Posterior cingulate gyrus (tissue), 11 donors: ENCODE measurements at regions of chr1 and their contacts with region 1.

Region 1: DNA sequence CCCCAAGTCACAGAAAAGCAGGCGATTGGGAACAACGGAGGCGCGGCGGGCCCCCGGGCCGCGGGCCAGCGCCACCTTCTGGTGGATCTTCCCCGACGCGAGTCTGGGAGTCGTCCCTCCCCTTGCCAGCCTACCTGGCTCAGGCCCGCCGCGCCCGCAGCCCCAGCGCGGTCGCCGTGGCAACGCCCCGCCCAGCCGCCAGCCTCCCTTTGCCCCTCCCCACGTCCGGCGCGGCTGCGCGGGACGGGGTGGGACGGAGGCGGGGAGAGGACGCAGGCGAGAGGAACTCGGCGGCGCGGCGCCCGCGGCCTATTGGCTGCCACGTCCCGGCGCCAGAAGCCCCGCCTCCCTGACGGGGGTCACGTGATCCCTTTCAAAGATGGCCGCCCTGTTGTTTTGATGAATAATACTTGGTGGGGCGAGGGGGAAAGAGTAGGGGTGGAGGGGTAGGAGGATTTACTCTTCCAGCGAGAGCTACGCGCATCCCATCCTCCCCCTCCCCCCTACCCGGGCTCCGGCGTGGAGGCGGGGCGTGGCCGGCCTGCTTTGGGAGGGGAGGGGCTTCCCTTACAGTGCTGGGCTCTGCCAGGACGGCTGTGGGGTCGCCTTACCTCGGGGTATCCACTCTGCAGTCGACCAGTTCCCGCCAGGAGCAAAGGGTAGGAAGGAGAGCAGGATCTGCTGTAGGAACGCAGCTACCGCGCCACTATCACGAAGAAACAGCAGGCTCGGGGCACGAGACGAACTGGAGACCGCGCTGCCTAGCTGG is at the start of gene UBE4B:
- DNase-seq: peak; percentile 96 to 100 (median 98)

Region 2: GRCh38 chr1:9150582-9151327 is 882.0 kb before region 1 on chr1:
- intact Hi-C with region 1: no loop called
- DNase-seq: peak in 2 of 10 donors; percentile 36 to 83

Region 3: GRCh38 chr1:9874959-9875635 is 157.7 kb before region 1 on chr1:
- intact Hi-C with region 1: loop called (anchors 10 kb)
- DNase-seq: peak; percentile 56 to 96 (median 78)

Region 4: GRCh38 chr1:9957726-9958125 is 75.0 kb before region 1 on chr1:
- intact Hi-C with region 1: loop called (anchors 5 kb)
- DNase-seq: no peak

Region 5: GRCh38 chr1:10108134-10108663 is 75.4 kb after region 1 on chr1:
- intact Hi-C with region 1: loop called (anchors 5 kb)
- DNase-seq: no peak

Region 6: GRCh38 chr1:10152709-10153284 is 120.0 kb after region 1 on chr1:
- intact Hi-C with region 1: loop called (anchors 5 kb)
- DNase-seq: peak; percentile 33 to 96 (median 80)

Region 7: DNA sequence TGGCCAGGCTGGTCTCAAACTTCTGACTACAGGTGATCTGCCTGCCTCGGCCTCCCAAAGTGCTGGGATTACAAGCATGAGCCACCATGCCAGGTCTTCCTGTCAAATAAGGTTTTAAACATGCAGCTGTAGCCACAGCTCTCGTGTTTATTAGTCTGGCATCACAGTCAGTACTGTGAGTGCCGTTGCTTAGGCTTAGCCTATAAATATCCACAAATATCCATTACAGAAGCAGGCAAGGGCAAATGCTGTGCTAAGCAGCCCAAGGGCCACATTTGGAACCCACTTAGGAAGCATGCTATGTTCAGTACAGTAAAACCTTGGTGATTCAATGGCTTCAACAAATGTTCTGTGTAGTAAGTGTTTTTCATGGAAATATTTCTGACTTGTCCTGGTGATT is 253.5 kb after region 1 on chr1:
- intact Hi-C with region 1: no loop called
- DNase-seq: peak in 1 of 10 donors; percentile 54